ENCODE measurements at regions of chr14 and their contacts with region 1.

Region 1: GRCh38 chr14:100524933-100525243 is 62.3 kb downstream of the BEGAIN start:
- DNase-seq: no peak
- H3K4me3 Mint-ChIP-seq: no peak overlapping the region
- H3K27ac Mint-ChIP-seq: no peak overlapping the region
- H3K4me1 Mint-ChIP-seq: no peaks in the 10 kb centered on the region
- H3K27me3 Mint-ChIP-seq: no peaks in the 10 kb centered on the region

Region 2: DNA sequence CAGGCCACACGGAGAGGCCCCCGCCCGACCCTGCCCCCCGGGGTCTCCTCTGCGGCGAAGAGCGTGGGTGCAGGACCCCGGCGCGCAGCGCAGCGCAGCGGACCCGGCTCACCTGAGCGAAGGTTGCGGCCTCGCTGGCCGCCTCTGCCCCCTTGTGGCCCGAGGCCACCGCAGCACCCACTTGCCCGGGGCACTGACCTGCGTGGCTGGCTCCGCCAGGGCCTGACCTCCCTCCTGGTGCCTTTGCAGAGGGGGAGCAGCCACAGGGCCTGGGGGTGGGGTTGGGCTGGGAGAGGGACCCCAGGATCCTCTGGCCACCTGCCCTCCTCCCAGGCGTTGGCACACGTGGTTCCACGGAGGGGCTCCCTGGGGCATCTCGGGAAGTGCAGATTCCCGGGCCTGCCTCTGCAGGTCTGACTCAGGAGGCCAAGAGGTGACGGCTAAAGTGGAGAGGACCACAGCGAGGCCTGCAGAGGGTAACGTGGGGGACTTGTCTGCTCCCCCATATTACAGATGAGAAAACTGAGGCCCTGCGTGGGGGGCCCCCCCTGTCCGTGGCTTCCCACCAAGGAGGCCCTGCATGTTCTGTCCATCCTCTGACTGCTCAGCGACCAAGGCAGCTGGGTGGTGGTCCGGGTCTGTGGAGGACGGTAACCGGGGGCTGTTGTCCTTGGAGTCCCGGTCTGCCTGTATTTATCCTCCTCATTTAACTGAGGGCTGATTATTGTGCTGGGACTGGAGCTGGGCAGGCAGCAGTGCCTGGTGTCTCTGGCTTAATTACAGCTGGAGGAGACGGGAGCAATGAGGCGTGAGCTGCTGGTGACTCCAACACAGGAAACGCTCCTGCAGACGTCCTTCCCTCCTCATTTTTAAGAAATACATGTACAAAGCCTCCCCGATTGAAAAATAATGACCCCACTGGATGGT is 130.2 kb after region 1 on chr14:
- intact Hi-C with region 1: loop called (anchors 2 kb)
- DNase-seq: peak; percentile 24
- H3K4me3 Mint-ChIP-seq: no peak overlapping the region
- H3K27ac Mint-ChIP-seq: no peak overlapping the region
- H3K4me1 Mint-ChIP-seq: no peaks in the 10 kb centered on the region
- H3K27me3 Mint-ChIP-seq: peaks cover 10% of the 10 kb centered on the region

Measured in activated T-helper 1 cell treated with anti-CD3 and anti-CD28 coated beads, Interleukin-12 subunit alpha, Interleukin-12 subunit beta, Interleukin-2, Interleukin-4 antibody, amounts not matched to agents 30 ng/mL and 10 ng/mL and 1 ng/mL, durations not matched to agents 14 hours and 24 hours and 36 hours (primary cell).